GM12878 (cell line): ENCODE measurements at regions of chr13 and their contacts with region 1.

Region 1: DNA sequence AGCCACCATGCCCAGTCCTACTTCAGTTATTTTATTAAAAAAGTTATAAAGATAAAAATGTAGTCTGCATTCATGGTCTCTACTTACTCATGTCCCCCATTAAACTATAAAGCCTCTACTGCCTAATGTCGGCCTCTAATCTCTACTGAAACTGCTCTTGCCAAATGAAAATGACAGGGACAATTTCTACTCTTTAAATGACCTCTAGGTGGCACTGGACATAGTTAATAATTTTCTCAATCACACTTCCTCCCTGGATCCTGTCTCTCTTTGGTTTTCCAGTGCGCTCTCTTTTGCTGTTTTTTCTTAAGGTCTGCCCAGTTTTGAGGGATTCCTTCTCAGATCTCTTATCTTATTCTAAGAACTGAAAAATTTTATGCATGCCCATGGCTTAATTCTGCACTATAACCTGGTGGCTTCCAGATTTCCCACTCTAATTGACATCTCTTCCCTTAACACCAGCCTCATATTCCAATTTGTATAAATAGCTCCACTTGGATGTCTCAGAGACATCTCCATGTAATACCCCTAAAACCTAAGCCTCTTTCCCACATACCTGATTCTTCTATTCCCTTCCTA is 54.3 kb downstream of the MTMR6 start:
- DNase-seq: no peak
- ATAC-seq: peak; percentile 81
- H3K4me3 ChIP-seq: no peak overlapping the region
- H3K27ac ChIP-seq: no peak overlapping the region
- H3K4me1 ChIP-seq: peaks cover 8% of the 10 kb centered on the region; the same call in 1 of the 2 replicates
- H3K27me3 ChIP-seq: no peaks in the 10 kb centered on the region; a peak in 1 of 4 replicates
- CTCF ChIP-seq: peak; percentile 45 to 56 (median 50); a peak in 4 of 6 replicates
- EP300 ChIP-seq: no peak
- POLR2A ChIP-seq: no peak
- RAD21 ChIP-seq: peak; percentile 54

Region 2: GRCh38 chr13:25249001-25249543 is 16.0 kb after region 1 on chr13:
- CTCF ChIA-PET with region 1: interaction called, 13 read pairs
- POLR2A ChIA-PET with region 1: no interaction called
- RAD21 ChIA-PET with region 1: interaction called, 3 read pairs
- SMC1A ChIA-PET with region 1: interaction called, 6 read pairs
- in situ Hi-C with region 1: no loop called
- intact Hi-C with region 1: no loop called
- DNase-seq: peak; percentile 17
- ATAC-seq: peak; percentile 91
- H3K4me3 ChIP-seq: no peak overlapping the region
- H3K27ac ChIP-seq: peak overlapping the region; percentile 21; the same call in 1 of the 2 replicates
- H3K4me1 ChIP-seq: peaks cover 18% of the 10 kb centered on the region
- H3K27me3 ChIP-seq: no peaks in the 10 kb centered on the region
- CTCF ChIP-seq: peak; percentile 45 to 66 (median 64); a peak in 5 of 6 replicates
- EP300 ChIP-seq: no peak
- POLR2A ChIP-seq: no peak
- RAD21 ChIP-seq: peak; percentile 86

Region 3: DNA sequence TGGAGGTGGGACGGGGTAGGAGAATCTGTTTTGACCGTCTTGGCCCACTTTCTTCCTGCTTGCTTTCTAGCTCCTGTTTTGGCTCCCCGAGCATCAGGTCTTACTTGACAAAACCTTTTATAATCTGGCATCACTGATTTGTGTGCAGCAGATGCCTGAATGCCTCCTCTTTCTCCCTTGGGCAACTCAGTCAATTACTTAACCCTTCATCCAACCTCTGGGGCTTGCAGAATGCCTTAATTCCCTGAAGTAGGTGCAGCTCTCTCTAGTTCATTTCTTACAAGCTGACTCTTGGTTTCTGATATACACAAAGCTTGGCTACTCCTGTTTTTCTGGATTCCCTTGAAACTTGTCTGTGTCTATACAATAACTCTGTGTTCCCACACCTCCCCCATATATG is 62.7 kb after region 1 on chr13:
- CTCF ChIA-PET with region 1: no interaction called
- POLR2A ChIA-PET with region 1: no interaction called
- RAD21 ChIA-PET with region 1: no interaction called
- SMC1A ChIA-PET with region 1: no interaction called
- in situ Hi-C with region 1: no loop called
- intact Hi-C with region 1: no loop called
- DNase-seq: no peak
- ATAC-seq: no peak
- H3K4me3 ChIP-seq: no peak overlapping the region
- H3K27ac ChIP-seq: no peak overlapping the region
- H3K4me1 ChIP-seq: no peaks in the 10 kb centered on the region
- H3K27me3 ChIP-seq: peaks cover 0 to 2% of the 10 kb centered on the region in 2 experiments; a peak in 1 of 4 replicates
- CTCF ChIP-seq: no peak
- EP300 ChIP-seq: no peak
- POLR2A ChIP-seq: no peak
- RAD21 ChIP-seq: no peak

Region 4: DNA sequence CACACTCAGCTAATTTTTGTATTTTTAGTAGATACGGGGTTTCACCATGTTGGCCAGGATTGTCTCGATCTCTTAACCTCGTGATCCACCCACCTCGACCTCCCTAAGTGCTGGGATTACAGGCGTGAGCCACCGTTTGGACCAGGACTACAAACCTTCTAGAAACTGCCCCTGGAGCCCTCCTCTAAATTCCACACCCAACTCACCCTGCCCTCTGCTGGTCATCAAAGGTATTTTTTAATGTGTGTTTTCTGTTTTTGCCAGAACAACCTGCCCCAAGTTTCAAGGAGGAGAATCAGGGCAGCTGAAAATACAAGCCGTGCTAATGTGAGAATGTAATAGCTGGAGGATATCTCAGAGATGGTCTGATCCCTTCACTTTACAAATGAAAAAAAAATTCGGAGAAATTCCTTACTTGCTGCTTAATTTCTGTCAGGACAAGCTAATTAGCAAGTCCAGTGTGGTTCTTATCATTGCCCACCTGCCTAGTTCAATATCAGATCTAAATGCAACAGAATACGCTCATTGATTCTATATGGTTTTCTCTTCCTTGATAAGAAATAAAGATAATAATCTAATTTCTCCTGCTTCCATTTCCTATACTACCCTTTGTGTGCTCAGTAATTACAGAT is 142.8 kb after region 1 on chr13:
- CTCF ChIA-PET with region 1: interaction called, 11 read pairs
- POLR2A ChIA-PET with region 1: no interaction called
- RAD21 ChIA-PET with region 1: interaction called, 3 read pairs
- SMC1A ChIA-PET with region 1: no interaction called
- in situ Hi-C with region 1: no loop called
- intact Hi-C with region 1: loop called (anchors 10 kb)
- DNase-seq: no peak
- ATAC-seq: peak; percentile 78
- H3K4me3 ChIP-seq: no peak overlapping the region
- H3K27ac ChIP-seq: no peak overlapping the region
- H3K4me1 ChIP-seq: no peaks in the 10 kb centered on the region
- H3K27me3 ChIP-seq: peaks cover 8 to 10% of the 10 kb centered on the region in 2 experiments; a peak in 3 of 4 replicates
- CTCF ChIP-seq: peak; percentile 57 to 65 (median 62); a peak in 5 of 6 replicates
- EP300 ChIP-seq: no peak
- POLR2A ChIP-seq: no peak
- RAD21 ChIP-seq: peak; percentile 67